Activated naive CD4-positive, alpha-beta T cell treated with anti-CD3 and anti-CD28 coated beads, Interleukin-2, amount 10 ng/mL, durations not matched to agents 7 days and 5 days (primary cell): ENCODE measurements at regions of chr1 and their contacts with region 1.

Region 1: DNA sequence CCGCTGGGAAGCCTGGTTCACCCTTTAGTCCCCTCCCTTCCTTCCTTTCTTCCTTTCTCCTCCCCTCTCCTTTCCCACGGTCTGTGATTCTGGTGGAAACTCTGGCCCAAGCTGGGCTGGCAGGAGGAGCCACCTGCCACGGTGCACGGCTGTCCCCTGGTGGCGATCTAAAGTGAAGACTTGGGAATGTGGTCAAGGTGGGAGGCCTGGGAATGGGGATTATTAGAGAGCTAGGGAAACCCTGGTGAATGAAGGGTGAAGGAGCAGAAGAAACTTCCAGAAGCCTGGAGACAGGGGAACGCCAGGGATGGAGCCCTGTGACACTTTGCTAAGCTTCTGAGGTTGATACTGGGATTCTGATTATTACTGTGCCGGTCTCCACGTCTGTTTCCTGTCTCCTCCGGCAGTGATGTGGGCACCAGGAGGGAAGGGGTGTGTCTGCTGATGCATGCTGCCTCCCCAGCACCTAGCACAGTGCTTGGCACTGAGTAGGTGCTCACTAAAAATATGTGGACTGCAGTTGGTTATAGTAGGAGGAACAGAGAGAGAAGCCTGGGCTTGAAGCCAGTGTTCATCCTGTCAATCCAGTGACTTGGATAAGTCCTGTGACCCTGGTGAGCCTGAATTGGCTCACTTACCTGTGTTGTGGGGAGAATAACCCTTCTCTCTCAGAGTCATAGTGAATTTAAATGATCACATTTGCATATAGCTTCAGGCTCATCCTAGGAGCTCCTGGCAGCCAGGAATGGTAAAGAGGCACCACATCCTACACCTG is 71.2 kb upstream of the NBPF3 start:
- DNase-seq: peak; percentile 68
- H3K4me3 Mint-ChIP-seq: no peak overlapping the region
- H3K27ac Mint-ChIP-seq: no peak overlapping the region
- H3K4me1 Mint-ChIP-seq: peaks cover 7% of the 10 kb centered on the region
- H3K27me3 Mint-ChIP-seq: peaks cover 7% of the 10 kb centered on the region

Region 2: DNA sequence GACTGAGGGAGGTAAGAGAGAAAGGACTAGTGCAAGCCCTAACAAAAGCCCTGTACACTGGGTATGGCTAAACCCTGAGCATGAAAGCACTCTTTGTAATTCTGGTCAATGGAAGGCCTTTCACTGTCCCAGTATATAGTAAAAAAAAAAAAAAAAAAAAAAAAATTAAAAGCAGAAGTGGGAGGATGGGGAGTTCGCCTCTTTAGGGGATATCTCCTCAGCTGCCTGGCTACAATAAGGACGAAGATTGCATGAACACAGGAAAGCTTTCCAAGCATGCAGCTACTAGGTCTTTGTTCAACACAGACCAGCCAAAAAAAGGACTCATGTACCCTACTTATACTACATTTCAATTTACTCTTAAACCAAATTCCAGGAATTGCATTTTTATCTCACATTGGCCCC is 251.1 kb before region 1 on chr1:
- CTCF ChIA-PET with region 1: no interaction called
- DNase-seq: no peak
- H3K4me3 Mint-ChIP-seq: no peak overlapping the region
- H3K27ac Mint-ChIP-seq: no peak overlapping the region
- H3K4me1 Mint-ChIP-seq: no peaks in the 10 kb centered on the region
- H3K27me3 Mint-ChIP-seq: no peaks in the 10 kb centered on the region

Region 3: GRCh38 chr1:21232044-21232443 is 136.7 kb before region 1 on chr1:
- CTCF ChIA-PET with region 1: interaction called, 89 read pairs
- DNase-seq: peak; percentile 43
- H3K4me3 Mint-ChIP-seq: no peak overlapping the region
- H3K27ac Mint-ChIP-seq: peak overlapping the region; percentile 42
- H3K4me1 Mint-ChIP-seq: no peaks in the 10 kb centered on the region
- H3K27me3 Mint-ChIP-seq: no peaks in the 10 kb centered on the region

Region 4: GRCh38 chr1:21255278-21255942 is 113.3 kb before region 1 on chr1:
- CTCF ChIA-PET with region 1: interaction called, 122 read pairs
- DNase-seq: peak; percentile 90
- H3K4me3 Mint-ChIP-seq: no peak overlapping the region
- H3K27ac Mint-ChIP-seq: peak overlapping the region; percentile 12
- H3K4me1 Mint-ChIP-seq: peaks cover 35% of the 10 kb centered on the region
- H3K27me3 Mint-ChIP-seq: no peaks in the 10 kb centered on the region

Region 5: DNA sequence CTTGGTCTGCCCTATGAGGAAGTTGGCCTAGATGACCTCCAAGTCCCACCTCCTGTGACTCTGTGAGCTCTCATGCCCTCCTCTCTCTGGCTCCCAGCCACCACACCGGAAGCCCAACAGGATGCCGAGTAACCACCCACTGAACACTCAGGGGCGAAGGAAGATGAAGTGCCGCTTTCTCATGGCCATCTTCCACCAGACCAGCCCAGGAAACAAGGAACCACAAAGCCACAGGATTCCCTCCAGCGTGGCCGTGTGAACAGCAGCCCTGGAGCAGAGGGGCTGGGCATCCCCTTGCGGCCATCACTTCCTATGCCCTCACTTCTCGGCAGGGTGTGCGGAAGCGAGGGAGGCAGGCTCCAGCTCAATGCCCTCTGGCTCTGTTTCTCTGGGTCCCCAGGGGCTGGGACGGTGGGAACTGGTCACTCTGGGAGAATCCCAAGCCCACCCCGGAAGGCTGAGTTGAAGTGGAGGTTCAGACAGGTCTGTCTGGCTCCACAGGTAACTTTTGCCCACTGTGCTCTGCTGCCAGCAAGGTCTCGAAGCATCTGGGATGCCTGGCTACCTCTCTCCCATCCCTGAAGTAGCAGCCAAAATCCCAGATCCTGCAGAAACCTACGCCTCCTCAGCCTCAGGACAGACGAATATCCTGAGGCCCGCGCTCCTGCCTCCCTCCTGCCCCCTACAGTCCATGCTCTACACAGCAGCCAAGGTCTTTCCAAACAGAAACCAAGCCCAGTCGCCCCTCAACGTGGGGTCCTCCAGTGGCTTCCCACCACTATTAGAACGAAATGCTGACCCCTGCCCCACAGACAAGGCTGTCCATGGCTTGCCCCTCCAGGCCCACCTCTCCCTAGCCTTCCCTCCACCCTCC is 34.3 kb before region 1 on chr1:
- CTCF ChIA-PET with region 1: interaction called, 13 read pairs
- DNase-seq: peak; percentile 88
- H3K4me3 Mint-ChIP-seq: peak overlapping the region; percentile 72
- H3K27ac Mint-ChIP-seq: peak overlapping the region; percentile 96
- H3K4me1 Mint-ChIP-seq: peaks cover 91% of the 10 kb centered on the region
- H3K27me3 Mint-ChIP-seq: no peaks in the 10 kb centered on the region

Region 6: GRCh38 chr1:21414015-21414414 is 45.3 kb after region 1 on chr1:
- CTCF ChIA-PET with region 1: no interaction called
- DNase-seq: no peak
- H3K4me3 Mint-ChIP-seq: no peak overlapping the region
- H3K27ac Mint-ChIP-seq: no peak overlapping the region
- H3K4me1 Mint-ChIP-seq: no peaks in the 10 kb centered on the region
- H3K27me3 Mint-ChIP-seq: peaks cover 45% of the 10 kb centered on the region

Region 7: GRCh38 chr1:21490774-21491553 is 122.3 kb after region 1 on chr1:
- CTCF ChIA-PET with region 1: interaction called, 23 read pairs
- DNase-seq: peak; percentile 50
- H3K4me3 Mint-ChIP-seq: no peak overlapping the region
- H3K27ac Mint-ChIP-seq: no peak overlapping the region
- H3K4me1 Mint-ChIP-seq: peaks cover 15% of the 10 kb centered on the region
- H3K27me3 Mint-ChIP-seq: peaks cover 54% of the 10 kb centered on the region

Region 8: GRCh38 chr1:21508580-21509350 is 140.1 kb after region 1 on chr1:
- CTCF ChIA-PET with region 1: no interaction called
- DNase-seq: peak; percentile 70
- H3K4me3 Mint-ChIP-seq: no peak overlapping the region
- H3K27ac Mint-ChIP-seq: no peak overlapping the region
- H3K4me1 Mint-ChIP-seq: peaks cover 4% of the 10 kb centered on the region
- H3K27me3 Mint-ChIP-seq: peaks cover 74% of the 10 kb centered on the region